CD4-positive, alpha-beta T cell (primary cell): ENCODE measurements at regions of chr10 and their contacts with region 1.

Region 1: GRCh38 chr10:114550756-114551635 is 107.1 kb downstream of the ABLIM1 start:
- DNase-seq: peak in 3 of 14 experiments; percentile 29 to 51 (median 45)
- ATAC-seq: no peak
- H3K4me3 ChIP-seq: no peak overlapping the region
- H3K4me3 Mint-ChIP-seq: no peak overlapping the region
- H3K27ac ChIP-seq: no peak overlapping the region
- H3K27ac Mint-ChIP-seq: peak overlapping the region; percentile 2
- H3K4me1 ChIP-seq: peaks cover 30% of the 10 kb centered on the region
- H3K4me1 Mint-ChIP-seq: peaks cover 33% of the 10 kb centered on the region
- H3K27me3 ChIP-seq: no peaks in the 10 kb centered on the region
- H3K27me3 Mint-ChIP-seq: no peaks in the 10 kb centered on the region
- CTCF ChIP-seq: peak; percentile 74

Region 2: DNA sequence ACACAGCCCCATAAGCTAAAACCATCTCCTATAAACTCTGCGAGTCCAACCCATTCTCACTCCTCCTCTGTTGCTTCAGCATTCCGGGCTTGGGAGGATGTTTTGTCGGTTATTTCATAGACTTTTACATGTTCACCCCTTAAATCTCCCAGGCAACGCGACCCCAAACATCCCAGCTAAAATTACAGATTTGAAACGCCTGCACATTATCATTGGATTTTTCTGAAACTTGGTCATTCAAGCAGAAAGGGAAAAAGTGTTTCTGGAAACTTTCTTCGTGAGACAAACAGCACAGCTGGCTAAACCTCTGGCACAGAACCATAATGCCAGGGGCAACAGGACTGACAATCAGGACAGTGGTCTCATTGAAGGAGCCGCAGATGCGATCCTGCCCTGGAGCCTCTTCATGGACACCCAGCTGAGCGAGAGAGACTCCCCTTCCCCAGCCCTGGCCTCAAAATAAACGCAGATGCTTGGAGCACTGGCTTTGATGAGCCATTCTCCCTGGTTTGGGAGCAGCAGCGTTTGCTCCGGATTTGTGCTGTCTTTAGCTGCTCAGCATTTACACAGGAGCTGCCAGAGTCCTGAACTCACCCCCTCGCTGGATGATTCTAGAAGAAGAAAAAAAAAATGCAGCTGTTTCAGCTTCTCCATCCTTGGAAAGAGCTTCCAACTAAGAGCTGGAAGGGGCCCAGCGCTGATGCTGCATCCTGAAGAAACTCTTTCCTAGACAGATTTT is 176.8 kb before region 1 on chr10:
- CTCF ChIA-PET with region 1: no interaction called
- POLR2A ChIA-PET with region 1: no interaction called
- intact Hi-C with region 1: no loop called
- DNase-seq: no peak
- ATAC-seq: no peak
- H3K4me3 ChIP-seq: no peak overlapping the region
- H3K4me3 Mint-ChIP-seq: no peak overlapping the region
- H3K27ac ChIP-seq: no peak overlapping the region
- H3K27ac Mint-ChIP-seq: no peak overlapping the region
- H3K4me1 ChIP-seq: no peaks in the 10 kb centered on the region
- H3K4me1 Mint-ChIP-seq: no peaks in the 10 kb centered on the region
- H3K27me3 ChIP-seq: no peaks in the 10 kb centered on the region
- H3K27me3 Mint-ChIP-seq: peaks cover 11% of the 10 kb centered on the region
- CTCF ChIP-seq: no peak

Region 3: GRCh38 chr10:114470956-114471905 is 79.8 kb before region 1 on chr10:
- CTCF ChIA-PET with region 1: interaction called, 10 read pairs
- POLR2A ChIA-PET with region 1: interaction called, 4 read pairs
- intact Hi-C with region 1: loop called (anchors 1 kb)
- DNase-seq: peak; percentile 45 to 87 (median 56)
- ATAC-seq: peak; percentile 84
- H3K4me3 ChIP-seq: no peak overlapping the region
- H3K4me3 Mint-ChIP-seq: peak overlapping the region; percentile 25
- H3K27ac ChIP-seq: peak overlapping the region; percentile 2 to 31
- H3K27ac Mint-ChIP-seq: peak overlapping the region; percentile 54
- H3K4me1 ChIP-seq: peaks cover 16% of the 10 kb centered on the region
- H3K4me1 Mint-ChIP-seq: peaks cover 52% of the 10 kb centered on the region
- H3K27me3 ChIP-seq: no peaks in the 10 kb centered on the region
- H3K27me3 Mint-ChIP-seq: no peaks in the 10 kb centered on the region
- CTCF ChIP-seq: peak; percentile 95

Region 4: DNA sequence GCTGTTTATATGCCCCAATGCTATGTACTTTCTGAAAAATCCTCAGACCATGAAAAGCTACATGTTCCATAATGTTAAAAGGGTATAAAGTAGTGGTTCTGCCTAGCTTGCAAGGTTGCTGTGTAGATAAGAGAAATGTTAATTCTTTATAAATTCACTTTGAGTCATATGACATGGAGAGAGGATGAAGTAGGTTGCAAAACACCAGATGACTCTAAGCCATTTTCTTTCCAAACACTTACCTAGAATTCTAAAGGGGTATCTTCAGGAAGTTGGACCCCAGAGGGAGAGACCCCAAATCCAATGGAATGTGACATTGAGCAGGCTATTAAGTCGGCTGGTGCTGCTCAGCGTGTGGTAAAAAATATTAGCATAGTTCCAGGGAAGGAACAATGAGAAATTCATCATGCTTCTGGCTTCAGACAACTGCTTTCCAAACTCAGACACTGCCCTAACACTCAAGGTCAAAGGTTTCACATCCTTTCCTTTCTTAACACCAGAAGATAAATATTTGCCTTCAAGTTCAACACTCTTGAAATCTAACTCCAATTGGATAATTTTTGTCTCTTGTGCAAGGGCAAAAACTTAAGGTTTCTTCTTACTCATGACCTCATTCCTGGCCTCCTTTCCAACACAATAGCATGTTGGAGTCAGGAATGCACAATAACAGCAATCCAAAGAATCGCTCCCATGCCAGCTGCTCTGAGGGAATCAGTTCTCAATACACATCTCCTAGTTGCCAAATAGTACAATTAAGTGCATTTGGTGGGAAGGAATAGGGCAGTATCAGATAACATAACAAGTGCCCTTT is 46.0 kb before region 1 on chr10:
- CTCF ChIA-PET with region 1: interaction called, 4 read pairs
- POLR2A ChIA-PET with region 1: no interaction called
- intact Hi-C with region 1: loop called in 1 of 2 experiments (anchors 5 kb)
- DNase-seq: no peak
- ATAC-seq: no peak
- H3K4me3 ChIP-seq: no peak overlapping the region
- H3K4me3 Mint-ChIP-seq: peak overlapping the region; percentile 21
- H3K27ac ChIP-seq: no peak overlapping the region
- H3K27ac Mint-ChIP-seq: peak overlapping the region; percentile 47
- H3K4me1 ChIP-seq: peaks cover 66% of the 10 kb centered on the region
- H3K4me1 Mint-ChIP-seq: peaks cover 96% of the 10 kb centered on the region
- H3K27me3 ChIP-seq: no peaks in the 10 kb centered on the region
- H3K27me3 Mint-ChIP-seq: no peaks in the 10 kb centered on the region
- CTCF ChIP-seq: no peak

Region 5: DNA sequence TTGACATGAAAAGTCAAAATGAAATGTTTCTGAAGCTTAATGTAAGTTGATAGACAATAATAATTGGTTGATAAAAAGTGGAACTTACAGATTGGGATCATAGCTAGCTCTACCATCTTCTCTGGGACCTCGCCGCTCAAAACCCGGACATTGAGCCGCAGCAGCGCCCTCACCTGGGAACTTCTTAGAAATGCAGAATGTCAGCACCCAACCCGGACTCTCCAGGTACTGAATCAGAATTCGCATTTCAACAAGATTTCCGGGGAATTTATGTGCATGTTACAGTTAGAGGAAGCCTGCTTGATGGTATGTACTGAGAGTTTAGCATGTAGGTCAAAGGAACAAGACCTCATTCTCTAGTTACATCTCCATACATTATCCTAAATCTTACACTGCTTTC is 143.8 kb after region 1 on chr10:
- CTCF ChIA-PET with region 1: interaction called, 3 read pairs
- POLR2A ChIA-PET with region 1: no interaction called
- intact Hi-C with region 1: loop called in 1 of 2 experiments (anchors 1 kb)
- DNase-seq: peak in 11 of 14 experiments; percentile 4 to 57 (median 18)
- ATAC-seq: peak; percentile 52
- H3K4me3 ChIP-seq: no peak overlapping the region
- H3K4me3 Mint-ChIP-seq: no peak overlapping the region
- H3K27ac ChIP-seq: no peak overlapping the region
- H3K27ac Mint-ChIP-seq: no peak overlapping the region
- H3K4me1 ChIP-seq: peaks cover 6% of the 10 kb centered on the region
- H3K4me1 Mint-ChIP-seq: peaks cover 11% of the 10 kb centered on the region
- H3K27me3 ChIP-seq: peaks cover 0 to 7% of the 10 kb centered on the region in 2 experiments
- H3K27me3 Mint-ChIP-seq: peaks cover 14% of the 10 kb centered on the region
- CTCF ChIP-seq: peak; percentile 15

Region 6: GRCh38 chr10:114779803-114780609 is 229.0 kb after region 1 on chr10:
- CTCF ChIA-PET with region 1: no interaction called
- POLR2A ChIA-PET with region 1: no interaction called
- intact Hi-C with region 1: loop called in 1 of 2 experiments (anchors 2 kb)
- DNase-seq: no peak
- ATAC-seq: no peak
- H3K4me3 ChIP-seq: no peak overlapping the region
- H3K4me3 Mint-ChIP-seq: no peak overlapping the region
- H3K27ac ChIP-seq: no peak overlapping the region
- H3K27ac Mint-ChIP-seq: no peak overlapping the region
- H3K4me1 ChIP-seq: no peaks in the 10 kb centered on the region
- H3K4me1 Mint-ChIP-seq: no peaks in the 10 kb centered on the region
- H3K27me3 ChIP-seq: no peaks in the 10 kb centered on the region
- H3K27me3 Mint-ChIP-seq: no peaks in the 10 kb centered on the region
- CTCF ChIP-seq: no peak

Region 7: GRCh38 chr10:115129752-115130151 is 578.8 kb after region 1 on chr10:
- CTCF ChIA-PET with region 1: no interaction called
- POLR2A ChIA-PET with region 1: no interaction called
- intact Hi-C with region 1: loop called (anchors 5 kb)
- DNase-seq: peak in 3 of 14 experiments; percentile 13 to 34 (median 27)
- ATAC-seq: no peak
- H3K4me3 ChIP-seq: no peak overlapping the region
- H3K4me3 Mint-ChIP-seq: no peak overlapping the region
- H3K27ac ChIP-seq: no peak overlapping the region
- H3K27ac Mint-ChIP-seq: no peak overlapping the region
- H3K4me1 ChIP-seq: no peaks in the 10 kb centered on the region
- H3K4me1 Mint-ChIP-seq: no peaks in the 10 kb centered on the region
- H3K27me3 ChIP-seq: no peaks in the 10 kb centered on the region
- H3K27me3 Mint-ChIP-seq: peaks cover 11% of the 10 kb centered on the region
- CTCF ChIP-seq: peak; percentile 27